ENCODE measurements at regions of chrX and their contacts with region 1.

Region 1: DNA sequence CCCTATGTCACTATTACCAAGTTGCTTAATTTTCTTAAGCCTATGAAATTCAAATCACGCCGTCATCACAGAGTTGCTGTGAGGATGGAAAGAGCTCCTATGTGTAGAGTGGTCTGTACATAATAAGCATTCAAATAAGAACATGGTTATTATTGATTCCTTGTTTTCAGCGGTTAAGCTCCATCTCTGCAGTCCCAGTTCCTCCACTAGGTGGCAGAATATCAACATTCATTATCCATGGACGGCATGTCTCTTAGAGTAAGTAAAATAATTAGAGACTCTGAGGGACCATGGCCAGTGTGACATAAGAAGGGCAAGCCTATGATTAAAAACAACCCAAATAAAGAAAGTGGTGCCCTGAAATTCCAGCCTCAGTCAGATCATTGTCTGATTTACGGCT is 132.5 kb upstream of the NHS start:
- DNase-seq: peak; percentile 46
- CTCF ChIP-seq: peak; percentile 68

Region 2: DNA sequence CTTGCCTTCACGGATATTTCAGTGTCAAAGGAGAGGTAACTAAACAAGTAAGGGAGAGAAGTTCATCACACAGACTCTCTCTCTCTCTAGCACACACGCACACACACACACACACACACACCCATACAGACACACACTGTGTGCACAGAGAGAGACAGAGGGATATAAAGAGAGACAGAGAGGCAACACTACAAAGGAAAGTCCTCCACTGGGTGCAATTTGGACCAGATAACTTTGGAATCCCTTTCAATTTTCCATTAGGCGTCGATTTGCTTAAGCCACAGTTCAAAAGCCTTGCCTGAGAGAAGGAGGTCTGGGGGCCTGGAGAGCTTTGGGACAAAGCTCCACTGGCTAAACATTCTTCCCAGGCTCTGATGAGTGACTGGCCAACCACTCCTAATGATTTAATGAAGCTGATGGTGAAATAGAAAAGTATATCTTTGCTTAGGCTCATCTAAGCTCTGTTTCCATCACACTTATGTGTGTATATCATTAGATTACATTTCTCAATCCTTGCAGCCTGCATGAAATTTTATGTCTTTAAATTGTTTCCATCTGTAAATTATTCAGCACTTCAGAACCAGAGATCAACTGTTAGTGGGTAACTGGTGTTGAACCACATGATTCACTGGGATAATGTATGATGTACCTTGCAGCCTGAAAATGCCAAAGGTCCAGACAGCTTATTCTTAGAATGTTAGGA is 894.4 kb before region 1 on chrX:
- in situ Hi-C with region 1: no loop called
- DNase-seq: no peak
- CTCF ChIP-seq: no peak

Region 3: GRCh38 chrX:17590892-17591740 is 348.6 kb after region 1 on chrX:
- in situ Hi-C with region 1: loop called (anchors 25 kb)
- DNase-seq: peak; percentile 20
- CTCF ChIP-seq: peak; percentile 63

Region 4: GRCh38 chrX:17617806-17618205 is 375.3 kb after region 1 on chrX:
- in situ Hi-C with region 1: no loop called
- DNase-seq: no peak
- CTCF ChIP-seq: no peak

Region 5: DNA sequence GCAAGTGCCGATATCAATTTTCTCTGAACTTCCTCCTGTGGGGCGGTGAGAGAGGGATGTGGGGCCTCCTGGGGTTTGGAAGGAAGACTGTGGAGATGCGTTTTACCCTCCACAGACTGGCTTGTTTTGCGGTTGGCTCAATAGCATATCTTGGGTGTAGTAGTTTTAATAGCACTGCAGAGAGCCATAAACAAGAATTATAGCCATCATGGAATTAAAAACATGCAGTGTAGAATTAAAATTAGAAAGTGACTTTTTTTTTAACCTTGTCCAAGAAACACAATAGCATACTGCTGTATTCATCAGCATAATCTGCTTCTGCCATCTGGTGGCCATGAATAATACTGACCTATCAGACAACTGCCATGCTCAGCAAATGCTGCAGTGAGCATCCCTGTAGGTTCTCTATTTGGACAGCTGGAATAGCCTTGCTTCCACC is 447.5 kb after region 1 on chrX:
- in situ Hi-C with region 1: loop called (anchors 10 kb)
- DNase-seq: peak; percentile 33
- CTCF ChIP-seq: peak; percentile 62